Right ventricle myocardium inferior (tissue), 1 donor: ENCODE measurements at regions of chr12 and their contacts with region 1.

Region 1: GRCh38 chr12:5783289-5783920 is 161.7 kb downstream of the ANO2 start:
- DNase-seq: no peak
- ATAC-seq: no peak

Region 2: GRCh38 chr12:5565893-5566664 is 217.3 kb before region 1 on chr12:
- intact Hi-C with region 1: no loop called
- DNase-seq: no peak
- ATAC-seq: no peak

Region 3: DNA sequence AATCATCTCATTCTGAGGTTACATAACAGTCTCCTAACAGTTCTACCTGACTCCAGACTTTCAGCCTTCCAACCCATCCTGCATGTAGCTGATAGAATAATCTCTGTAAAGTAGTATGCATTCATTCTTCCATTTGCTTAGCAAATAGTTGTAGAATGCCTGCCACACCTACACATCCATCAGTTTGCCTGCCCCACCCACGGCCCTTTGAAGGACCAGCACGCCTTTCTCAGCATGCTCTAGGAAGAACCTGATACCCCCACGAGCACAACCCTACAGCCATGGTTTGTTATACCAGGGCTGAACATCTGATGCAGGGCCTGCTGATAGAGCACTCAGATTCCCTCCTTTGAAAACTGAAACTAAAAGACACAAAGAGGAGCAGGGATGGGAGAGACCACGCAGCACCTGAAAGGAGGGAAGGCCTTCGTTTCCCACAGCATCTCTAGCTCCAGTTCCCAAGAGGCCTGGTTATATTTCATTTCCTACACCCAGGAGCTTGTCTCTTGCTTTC is 43.5 kb before region 1 on chr12:
- intact Hi-C with region 1: loop called (anchors 5 kb)
- DNase-seq: no peak
- ATAC-seq: no peak